Activated CD4-positive, alpha-beta memory T cell treated with anti-CD3 and anti-CD28 coated beads for 36 hours (primary cell): ENCODE measurements at regions of chr3 and their contacts with region 1.

Region 1: GRCh38 chr3:111668912-111669488 is 73.9 kb upstream of the ZBED2 start:
- DNase-seq: no peak
- H3K4me3 Mint-ChIP-seq: no peak overlapping the region
- H3K27ac Mint-ChIP-seq: no peak overlapping the region
- H3K4me1 Mint-ChIP-seq: peaks cover 74% of the 10 kb centered on the region
- H3K27me3 Mint-ChIP-seq: no peaks in the 10 kb centered on the region

Region 2: DNA sequence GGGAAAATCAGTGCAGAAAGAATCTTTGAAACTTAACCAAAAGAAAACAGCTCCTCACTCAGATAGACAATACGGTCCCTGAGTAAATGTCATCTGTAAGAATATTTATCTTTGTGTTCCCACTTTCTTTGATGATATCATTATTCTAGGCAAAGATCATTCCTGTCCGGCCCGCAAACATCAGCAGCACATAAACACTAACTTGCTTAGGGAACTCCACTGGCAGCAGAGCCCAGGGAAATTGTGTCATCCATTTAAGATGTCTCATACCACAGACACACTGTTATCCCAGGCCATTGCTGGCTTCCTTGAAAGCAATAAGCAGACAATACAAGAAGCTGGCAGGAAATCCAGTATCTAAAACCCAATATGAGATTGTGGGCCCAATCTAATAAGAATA is 147.1 kb before region 1 on chr3:
- CTCF ChIA-PET with region 1: no interaction called
- POLR2A ChIA-PET with region 1: no interaction called
- intact Hi-C with region 1: no loop called
- DNase-seq: no peak
- H3K4me3 Mint-ChIP-seq: no peak overlapping the region
- H3K27ac Mint-ChIP-seq: no peak overlapping the region
- H3K4me1 Mint-ChIP-seq: no peaks in the 10 kb centered on the region
- H3K27me3 Mint-ChIP-seq: no peaks in the 10 kb centered on the region

Region 3: GRCh38 chr3:111577794-111578685 is 91.0 kb before region 1 on chr3:
- CTCF ChIA-PET with region 1: interaction called, 27 read pairs
- POLR2A ChIA-PET with region 1: no interaction called
- intact Hi-C with region 1: loop called (anchors 1 kb)
- DNase-seq: no peak
- H3K4me3 Mint-ChIP-seq: peak overlapping the region; percentile 35
- H3K27ac Mint-ChIP-seq: peak overlapping the region; percentile 83
- H3K4me1 Mint-ChIP-seq: peaks cover 73% of the 10 kb centered on the region
- H3K27me3 Mint-ChIP-seq: no peaks in the 10 kb centered on the region

Region 4: GRCh38 chr3:111681661-111682426 is 12.8 kb after region 1 on chr3:
- CTCF ChIA-PET with region 1: interaction called, 12 read pairs
- POLR2A ChIA-PET with region 1: no interaction called
- intact Hi-C with region 1: no loop called
- DNase-seq: no peak
- H3K4me3 Mint-ChIP-seq: no peak overlapping the region
- H3K27ac Mint-ChIP-seq: no peak overlapping the region
- H3K4me1 Mint-ChIP-seq: peaks cover 48% of the 10 kb centered on the region
- H3K27me3 Mint-ChIP-seq: no peaks in the 10 kb centered on the region

Region 5: DNA sequence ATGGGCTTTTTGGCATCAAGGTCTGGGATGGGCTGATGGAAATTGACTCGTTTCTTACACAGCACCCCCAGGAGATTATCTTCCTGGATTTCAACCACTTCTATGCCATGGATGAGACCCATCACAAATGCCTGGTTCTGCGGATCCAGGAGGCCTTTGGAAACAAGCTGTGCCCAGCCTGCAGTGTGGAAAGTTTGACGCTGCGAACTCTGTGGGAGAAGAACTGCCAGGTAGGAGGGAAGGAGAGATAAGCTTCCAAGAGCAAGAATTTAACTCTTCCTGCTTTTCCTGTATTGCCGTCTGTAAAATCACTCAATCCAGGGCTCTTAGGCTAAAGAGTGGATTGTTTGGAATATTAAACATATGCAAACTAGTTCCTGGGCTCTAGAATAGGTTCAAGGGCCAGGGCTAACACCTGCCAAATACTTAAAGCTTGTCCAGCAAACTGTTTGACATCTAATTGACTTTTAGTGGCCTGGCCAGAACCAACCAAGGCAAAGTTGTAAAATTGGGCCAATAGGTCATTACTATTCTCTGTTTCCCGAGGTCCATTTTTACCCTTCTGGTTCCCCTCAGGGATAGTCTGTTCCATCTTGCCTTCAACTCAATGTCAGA is 39.3 kb after region 1 on chr3:
- CTCF ChIA-PET with region 1: interaction called, 21 read pairs
- POLR2A ChIA-PET with region 1: no interaction called
- intact Hi-C with region 1: no loop called
- DNase-seq: no peak
- H3K4me3 Mint-ChIP-seq: no peak overlapping the region
- H3K27ac Mint-ChIP-seq: no peak overlapping the region
- H3K4me1 Mint-ChIP-seq: peaks cover 27% of the 10 kb centered on the region
- H3K27me3 Mint-ChIP-seq: no peaks in the 10 kb centered on the region

Region 6: GRCh38 chr3:111859974-111860859 is 191.2 kb after region 1 on chr3:
- CTCF ChIA-PET with region 1: interaction called, 7 read pairs
- POLR2A ChIA-PET with region 1: no interaction called
- intact Hi-C with region 1: loop called (anchors 1 kb)
- DNase-seq: peak; percentile 71
- H3K4me3 Mint-ChIP-seq: peak overlapping the region; percentile 79
- H3K27ac Mint-ChIP-seq: no peak overlapping the region
- H3K4me1 Mint-ChIP-seq: peaks cover 13% of the 10 kb centered on the region
- H3K27me3 Mint-ChIP-seq: peaks cover 7% of the 10 kb centered on the region

Region 7: DNA sequence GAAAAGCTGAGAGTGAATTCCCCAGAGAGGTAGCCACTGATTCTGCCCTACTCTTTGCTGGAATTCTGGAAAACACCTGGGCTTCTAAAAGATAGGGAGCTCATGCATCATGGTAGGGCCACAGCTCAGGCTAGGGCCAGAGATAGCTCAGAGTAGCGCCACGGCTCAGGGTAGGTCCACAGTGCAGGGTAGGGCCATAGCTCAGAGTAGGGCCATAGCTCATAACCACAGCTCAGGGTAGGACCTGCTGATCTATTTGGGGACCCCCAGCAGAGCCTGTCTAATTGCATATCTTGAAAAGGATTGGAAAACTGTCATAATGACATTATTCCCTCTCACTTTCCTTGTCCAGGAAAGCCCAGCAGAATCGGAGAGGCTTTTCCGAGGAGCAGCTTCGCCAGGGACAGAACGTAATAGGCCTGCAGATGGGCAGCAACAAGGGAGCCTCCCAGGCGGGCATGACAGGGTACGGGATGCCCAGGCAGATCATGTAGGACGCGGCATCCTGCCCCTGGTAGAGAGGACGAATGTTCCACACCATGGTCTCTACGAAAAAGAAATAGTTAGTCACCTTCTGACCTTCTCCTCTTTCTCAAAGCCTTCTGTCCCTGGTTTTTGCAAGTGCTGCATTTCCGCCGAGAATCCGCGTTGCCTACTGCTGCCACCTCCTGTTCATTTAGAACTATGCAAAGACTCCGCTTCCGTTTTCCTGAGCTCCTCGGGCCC is 344.2 kb after region 1 on chr3:
- CTCF ChIA-PET with region 1: interaction called, 36 read pairs
- POLR2A ChIA-PET with region 1: no interaction called
- intact Hi-C with region 1: no loop called
- DNase-seq: peak; percentile 82
- H3K4me3 Mint-ChIP-seq: no peak overlapping the region
- H3K27ac Mint-ChIP-seq: peak overlapping the region; percentile 40
- H3K4me1 Mint-ChIP-seq: peaks cover 19% of the 10 kb centered on the region
- H3K27me3 Mint-ChIP-seq: no peaks in the 10 kb centered on the region